Posterior vena cava (tissue), 2 donors: ENCODE measurements at regions of chr14 and their contacts with region 1.

Region 1: DNA sequence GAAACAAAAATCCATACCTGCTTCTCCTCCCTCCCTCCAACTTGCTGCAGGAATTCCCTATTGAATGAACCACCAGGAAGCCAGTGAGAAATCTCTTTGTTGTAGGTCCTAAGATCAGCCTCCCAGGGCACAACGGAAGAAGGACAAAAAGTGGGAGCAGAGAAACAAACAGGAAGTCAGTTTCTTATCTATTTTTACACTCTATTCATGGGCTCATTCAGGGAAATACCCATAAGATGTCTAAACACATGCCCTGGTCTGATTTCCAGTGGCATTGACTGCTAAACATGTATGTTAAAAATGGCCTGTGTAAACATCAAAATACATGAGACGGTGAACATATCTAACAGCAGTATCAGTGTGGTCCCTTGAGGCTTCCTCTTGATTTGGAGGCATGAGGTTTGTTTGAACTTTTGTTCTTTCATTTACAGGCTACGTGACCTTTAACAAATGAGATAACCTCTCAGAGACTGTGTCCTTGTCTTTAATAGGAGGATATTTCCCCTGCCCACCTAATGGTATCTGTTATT is 18.8 kb downstream of the GPR65 start:
- DNase-seq: no peak

Region 2: GRCh38 chr14:87767567-87767901 is 256.2 kb before region 1 on chr14:
- intact Hi-C with region 1: loop called in 1 of 2 experiments (anchors 10 kb)
- DNase-seq: no peak

Region 3: GRCh38 chr14:88063845-88064244 is 40.1 kb after region 1 on chr14:
- intact Hi-C with region 1: no loop called
- DNase-seq: no peak

Region 4: GRCh38 chr14:89013084-89013504 is 989.4 kb after region 1 on chr14:
- intact Hi-C with region 1: no loop called
- DNase-seq: no peak